ENCODE measurements at regions of chr12 and their contacts with region 1.

Region 1: GRCh38 chr12:54749191-54749818 is 101.1 kb upstream of the DCD start:
- DNase-seq: peak; percentile 49
- H3K4me3 Mint-ChIP-seq: peak overlapping the region; percentile 39
- H3K27ac Mint-ChIP-seq: no peak overlapping the region
- H3K4me1 Mint-ChIP-seq: peaks cover 30% of the 10 kb centered on the region
- H3K27me3 Mint-ChIP-seq: no peaks in the 10 kb centered on the region

Region 2: GRCh38 chr12:54723379-54724256 is 25.7 kb before region 1 on chr12:
- CTCF ChIA-PET with region 1: interaction called, 24 read pairs
- DNase-seq: peak; percentile 44
- H3K4me3 Mint-ChIP-seq: no peak overlapping the region
- H3K27ac Mint-ChIP-seq: no peak overlapping the region
- H3K4me1 Mint-ChIP-seq: peaks cover 32% of the 10 kb centered on the region
- H3K27me3 Mint-ChIP-seq: peaks cover 21% of the 10 kb centered on the region

Region 3: GRCh38 chr12:54853995-54854566 is 104.8 kb after region 1 on chr12 and contains the start of gene MUCL1:
- CTCF ChIA-PET with region 1: interaction called, 14 read pairs
- DNase-seq: peak; percentile 81
- H3K4me3 Mint-ChIP-seq: no peak within 1 kb of the TSS
- H3K27ac Mint-ChIP-seq: no peak within 1 kb of the TSS
- H3K4me1 Mint-ChIP-seq: peaks cover 3% of the 10 kb centered on the region
- H3K27me3 Mint-ChIP-seq: peaks cover 7% of the 10 kb centered on the region

Region 4: DNA sequence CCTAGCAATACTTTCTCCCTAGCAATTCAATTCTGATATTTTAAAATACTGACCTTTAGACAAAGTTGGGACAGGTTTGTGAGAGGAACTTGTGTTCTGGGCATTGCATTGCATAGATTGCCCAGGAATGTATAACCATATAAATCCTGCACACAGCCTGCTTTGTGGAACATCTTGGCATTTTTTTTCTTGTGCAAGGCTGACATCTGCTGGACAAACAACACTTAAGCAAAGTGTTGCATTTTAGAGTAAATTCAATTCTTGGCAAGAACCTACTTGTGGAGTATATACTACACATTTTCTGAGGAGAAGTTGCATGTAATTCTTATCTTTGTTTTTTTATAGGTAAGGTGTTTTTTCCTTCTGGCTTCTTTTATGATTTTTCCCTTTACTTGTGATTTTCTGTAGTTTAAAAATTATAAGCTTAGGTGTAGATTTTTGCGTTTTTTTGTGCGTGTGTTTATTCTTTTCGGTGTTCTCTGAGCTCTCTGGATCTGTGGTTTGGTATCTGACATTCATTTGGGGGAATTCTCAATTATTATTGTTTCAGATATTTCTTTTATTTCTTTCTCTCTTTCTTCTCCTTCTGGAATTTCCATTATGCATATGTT is 208.8 kb after region 1 on chr12:
- CTCF ChIA-PET with region 1: interaction called, 55 read pairs
- DNase-seq: peak; percentile 65
- H3K4me3 Mint-ChIP-seq: no peak overlapping the region
- H3K27ac Mint-ChIP-seq: no peak overlapping the region
- H3K4me1 Mint-ChIP-seq: peaks cover 73% of the 10 kb centered on the region
- H3K27me3 Mint-ChIP-seq: no peaks in the 10 kb centered on the region